ENCODE measurements at regions of chr2 and their contacts with region 1.

Region 1: GRCh38 chr2:69279931-69280681 is 106.9 kb downstream of the GFPT1 start:
- DNase-seq: no peak
- H3K4me3 ChIP-seq: no peak overlapping the region
- H3K27ac ChIP-seq: no peak overlapping the region
- H3K4me1 ChIP-seq: no peaks in the 10 kb centered on the region
- H3K27me3 ChIP-seq: no peaks in the 10 kb centered on the region
- CTCF ChIP-seq: no peak
- POLR2A ChIP-seq: no peak

Region 2: DNA sequence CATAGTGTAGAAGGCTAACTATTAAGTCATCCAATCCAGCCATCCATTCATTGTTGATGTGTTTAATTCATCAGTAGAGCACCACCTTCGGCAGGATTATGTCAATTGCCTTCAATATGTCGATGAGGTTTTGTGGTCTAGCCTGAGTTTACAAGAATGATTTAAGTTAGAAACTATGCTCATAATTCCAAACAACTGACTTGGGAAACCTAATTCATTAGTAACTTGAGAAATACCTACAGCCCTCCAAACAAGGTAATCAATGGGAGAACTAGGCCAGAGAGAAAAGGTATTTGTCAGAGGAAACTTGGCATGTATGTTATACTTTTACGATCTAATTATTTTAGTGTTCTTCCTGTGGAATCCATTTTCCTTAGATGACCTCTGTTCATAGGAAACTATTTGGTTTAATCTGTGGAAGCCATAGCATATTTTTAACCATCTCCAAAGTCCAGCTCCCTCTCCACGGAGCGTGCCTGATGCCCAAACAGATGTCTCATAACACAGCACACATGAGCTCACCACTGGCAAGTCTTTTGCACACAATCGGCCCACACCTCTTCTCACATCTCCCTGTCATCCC is 41.6 kb before region 1 on chr2:
- intact Hi-C with region 1: loop called (anchors 1 kb)
- DNase-seq: peak in 1 of 2 donors; percentile 27
- H3K4me3 ChIP-seq: no peak overlapping the region
- H3K27ac ChIP-seq: no peak overlapping the region
- H3K4me1 ChIP-seq: peaks cover 46% of the 10 kb centered on the region
- H3K27me3 ChIP-seq: no peaks in the 10 kb centered on the region
- CTCF ChIP-seq: no peak
- POLR2A ChIP-seq: no peak

Measured in vagina (tissue), 2 donors.